ENCODE measurements at regions of chr3 and their contacts with region 1.

Region 1: GRCh38 chr3:57998366-57999283 is 9.6 kb upstream of the FLNB start:
- H3K4me3 Mint-ChIP-seq: peak overlapping the region; percentile 4
- H3K27ac Mint-ChIP-seq: no peak overlapping the region
- H3K4me1 Mint-ChIP-seq: peaks cover 37% of the 10 kb centered on the region
- H3K27me3 Mint-ChIP-seq: peaks cover 2% of the 10 kb centered on the region

Region 2: GRCh38 chr3:57729334-57730045 is 269.1 kb before region 1 on chr3:
- intact Hi-C with region 1: no loop called
- H3K4me3 Mint-ChIP-seq: no peak overlapping the region
- H3K27ac Mint-ChIP-seq: no peak overlapping the region
- H3K4me1 Mint-ChIP-seq: peaks cover 46% of the 10 kb centered on the region
- H3K27me3 Mint-ChIP-seq: no peaks in the 10 kb centered on the region

Region 3: GRCh38 chr3:57961828-57962447 is 36.7 kb before region 1 on chr3:
- intact Hi-C with region 1: loop called (anchors 5 kb)
- H3K4me3 Mint-ChIP-seq: no peak overlapping the region
- H3K27ac Mint-ChIP-seq: no peak overlapping the region
- H3K4me1 Mint-ChIP-seq: peaks cover 47% of the 10 kb centered on the region
- H3K27me3 Mint-ChIP-seq: no peaks in the 10 kb centered on the region

Measured in dendritic cell treated with granulocyte-macrophage colony-stimulating factor and Interleukin-4, amounts not matched to agents 40 ng/mL and 50 ng/mL, for 4 days (primary cell).